ENCODE measurements at regions of chr3 and their contacts with region 1.

Region 1: GRCh38 chr3:187223799-187224198 is 26.5 kb downstream of the RTP1 start:
- DNase-seq: no peak

Region 2: DNA sequence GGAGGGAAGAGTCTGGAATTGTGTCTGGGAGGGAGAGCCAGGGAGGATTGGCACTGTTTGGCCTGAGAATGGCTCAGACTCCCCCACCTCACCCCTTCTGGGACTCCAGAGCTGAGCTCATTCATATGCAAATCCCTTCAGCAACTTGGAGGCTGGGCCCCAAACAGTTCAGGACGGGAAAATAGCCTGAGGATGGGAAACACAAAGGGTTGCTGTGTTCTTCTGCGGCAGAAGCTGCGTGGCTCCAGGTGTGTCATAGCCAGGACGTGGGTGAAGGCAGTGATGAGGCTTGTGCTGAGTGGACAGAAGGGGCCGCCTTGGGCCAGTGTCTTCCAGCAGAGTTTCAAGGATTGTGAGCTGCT is 51.2 kb after region 1 on chr3:
- intact Hi-C with region 1: no loop called
- DNase-seq: peak in 1 of 10 donors; percentile 17

Region 3: GRCh38 chr3:187291001-187291511 is 67.3 kb after region 1 on chr3:
- intact Hi-C with region 1: loop called (anchors 5 kb)
- DNase-seq: peak in 4 of 10 donors; percentile 22 to 87 (median 54)

Region 4: DNA sequence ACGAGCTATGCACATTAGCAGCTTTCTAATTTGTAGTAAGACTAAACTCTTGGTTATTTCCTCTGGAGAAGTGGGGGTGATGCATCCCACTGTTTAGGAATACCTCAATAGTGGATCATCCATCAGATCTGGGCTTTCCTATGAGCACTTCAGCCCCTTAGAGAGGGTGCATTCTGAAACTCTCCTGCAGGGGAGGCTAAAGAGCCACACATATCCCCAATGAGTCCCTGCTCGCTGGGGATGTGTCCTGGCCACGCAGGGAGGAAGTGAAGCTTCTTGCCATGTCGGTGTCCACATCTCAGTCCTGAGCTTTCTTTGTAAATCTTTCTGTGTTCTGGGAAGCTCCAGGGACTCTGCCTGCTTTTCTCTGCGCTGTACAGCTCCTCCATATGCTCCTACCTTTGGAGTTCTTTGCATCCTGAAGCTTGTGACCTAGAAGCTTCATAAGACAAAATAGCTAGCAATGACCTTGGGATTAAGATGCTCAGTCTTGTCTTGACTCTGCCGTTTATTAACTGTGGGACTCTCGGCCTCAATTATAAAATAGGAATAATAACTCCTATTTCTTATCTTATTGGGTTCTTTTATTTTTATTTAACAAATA is 96.0 kb after region 1 on chr3:
- intact Hi-C with region 1: loop called (anchors 1 kb)
- DNase-seq: peak; percentile 33 to 90 (median 71)

Region 5: DNA sequence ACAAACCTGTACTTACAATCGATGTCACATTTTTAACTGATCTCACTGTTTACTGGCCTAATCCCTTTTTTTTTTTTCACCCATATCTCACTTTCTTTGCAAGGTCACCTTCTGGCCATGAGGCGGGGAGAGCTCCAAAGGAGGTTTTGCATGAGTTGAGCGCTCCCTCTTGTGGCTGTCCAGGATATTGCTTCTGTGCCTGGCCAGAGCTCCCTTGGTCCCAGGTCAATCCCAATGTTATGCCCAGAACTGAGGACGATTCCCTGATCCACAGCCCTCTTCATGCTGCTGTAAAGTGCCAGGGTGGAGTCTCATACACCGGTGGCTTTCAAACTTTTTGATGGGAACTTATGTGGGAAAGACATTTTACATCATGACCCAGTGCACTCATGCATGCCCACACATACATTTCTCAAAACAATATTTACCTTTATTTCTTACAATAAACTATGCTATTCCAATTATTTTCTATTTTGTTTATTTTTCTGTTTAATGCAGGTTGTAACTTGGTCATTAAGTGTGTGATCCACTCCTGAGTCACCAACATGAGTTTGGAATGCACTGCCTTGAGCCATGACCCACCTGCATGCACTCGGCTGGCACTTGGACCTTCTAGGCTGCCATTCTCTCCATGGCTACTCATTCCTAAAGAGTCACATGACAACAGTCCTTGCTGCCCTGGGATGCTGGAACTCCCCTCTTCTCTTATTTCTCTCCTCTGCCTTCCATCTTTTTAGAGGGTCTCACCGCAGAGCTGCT is 456.0 kb after region 1 on chr3:
- intact Hi-C with region 1: loop called (anchors 1 kb)
- DNase-seq: peak; percentile 42 to 94 (median 79)

Region 6: DNA sequence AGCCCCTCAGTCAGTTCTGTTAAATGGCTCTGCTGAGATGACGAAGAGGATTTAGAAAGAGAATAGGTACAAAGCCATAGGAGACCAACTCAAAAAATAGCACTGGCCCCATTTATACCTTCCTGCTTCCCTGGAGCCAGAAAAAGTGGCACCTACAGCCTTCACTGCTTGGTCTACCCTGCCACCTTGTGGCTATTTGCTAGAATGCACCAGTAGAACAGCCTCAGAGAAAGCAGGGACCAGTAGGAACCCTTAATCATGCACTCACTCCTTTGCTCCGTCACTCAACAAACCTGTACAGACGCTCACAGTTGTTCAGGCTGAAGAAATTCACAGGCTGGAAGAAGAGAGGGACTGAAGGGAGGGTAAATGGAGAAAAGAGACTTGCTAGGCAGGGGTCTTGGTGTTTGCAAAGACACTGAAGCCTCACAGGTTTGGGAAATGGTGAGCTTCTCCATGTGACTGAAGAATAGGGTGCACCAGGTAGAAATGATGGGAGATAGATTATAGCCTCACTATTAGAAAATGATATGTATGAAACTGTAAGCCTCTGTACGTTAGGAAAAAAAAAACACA is 490.7 kb after region 1 on chr3:
- intact Hi-C with region 1: loop called (anchors 1 kb)
- DNase-seq: peak in 8 of 10 donors; percentile 46 to 87 (median 76)

Measured in posterior cingulate gyrus (tissue), 11 donors.